Left lung (tissue), 14 donors: ENCODE measurements at regions of chr15 and their contacts with region 1.

Region 1: DNA sequence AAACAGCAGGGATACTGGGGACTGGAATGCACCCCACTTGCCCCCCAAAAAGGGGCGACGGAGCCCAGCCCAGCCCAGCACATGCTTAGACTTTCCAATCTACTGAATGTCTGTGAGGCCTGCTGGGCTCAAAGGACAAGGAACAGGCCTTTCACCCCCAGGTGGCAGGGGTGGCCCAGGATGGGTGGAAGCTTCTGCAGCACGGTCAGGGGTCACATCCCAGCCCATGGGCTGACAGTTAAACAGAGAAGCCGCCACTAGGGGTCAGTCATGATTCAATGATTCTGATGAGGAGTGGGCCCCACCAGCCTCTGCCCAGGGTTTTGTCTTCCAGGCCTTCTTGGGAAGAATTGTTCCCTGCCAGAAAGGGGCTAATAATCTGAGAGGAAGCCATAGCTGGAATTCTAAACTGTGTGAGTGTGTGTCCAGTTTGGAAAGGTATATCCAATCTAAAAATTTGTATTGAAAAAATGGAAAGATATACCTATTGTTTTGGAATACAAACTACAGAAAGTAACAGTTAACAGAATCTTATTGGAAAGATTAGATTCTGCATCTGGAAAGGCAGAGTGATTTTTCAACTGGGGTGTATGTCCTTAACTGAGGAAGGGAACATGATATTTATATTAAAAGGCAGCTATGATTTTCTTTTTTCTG is 2.2 kb downstream of the CHRNB4 start:
- DNase-seq: peak in 1 of 4 donors; percentile 72
- ATAC-seq: peak; percentile 61
- H3K4me3 ChIP-seq: no peak overlapping the region
- H3K27ac ChIP-seq: no peak overlapping the region
- H3K4me1 ChIP-seq: peaks cover 5 to 8% of the 10 kb centered on the region in 2 donors
- H3K27me3 ChIP-seq: peaks cover 0 to 22% of the 10 kb centered on the region in 2 donors
- CTCF ChIP-seq: peak; percentile 53 to 54

Region 2: DNA sequence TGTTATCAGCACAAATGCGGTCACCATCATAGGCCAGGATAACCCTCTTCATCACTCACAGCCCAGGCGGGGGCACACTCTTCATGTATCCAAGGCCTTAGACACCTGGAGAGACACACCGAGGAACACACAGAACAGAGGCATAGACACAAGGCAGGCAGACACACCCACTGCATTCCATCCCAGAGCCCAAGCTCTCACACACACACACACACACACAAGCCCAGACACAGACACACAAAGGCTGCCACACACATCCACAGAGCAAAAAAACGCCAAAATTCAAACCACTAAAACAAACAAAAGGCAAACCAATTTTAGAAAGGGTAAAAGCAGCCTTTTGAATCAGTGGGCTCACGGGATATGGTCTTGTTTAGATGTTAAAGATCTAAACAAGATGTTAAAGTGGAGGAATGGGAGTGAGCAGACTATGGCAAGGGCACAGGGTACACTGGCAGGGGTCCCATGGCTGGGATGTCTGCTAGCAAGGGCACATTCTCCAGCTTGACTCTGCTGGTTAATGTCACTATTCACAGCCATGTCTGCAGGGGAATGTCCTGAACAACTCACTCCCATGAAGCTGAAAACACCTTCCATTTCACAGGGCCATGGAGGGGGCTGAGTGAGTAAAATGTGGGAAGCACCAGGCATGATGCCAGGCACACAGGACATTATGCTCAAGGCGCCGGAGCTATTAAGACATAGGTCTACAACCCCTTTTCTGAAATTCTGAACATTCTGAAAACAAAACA is 313.5 kb before region 1 on chr15:
- intact Hi-C with region 1: no loop called
- DNase-seq: no peak
- ATAC-seq: peak; percentile 33
- H3K4me3 ChIP-seq: no peak overlapping the region
- H3K27ac ChIP-seq: no peak overlapping the region
- H3K4me1 ChIP-seq: no peaks in the 10 kb centered on the region
- H3K27me3 ChIP-seq: no peaks in the 10 kb centered on the region
- CTCF ChIP-seq: no peak

Region 3: GRCh38 chr15:78527325-78527724 is 111.5 kb before region 1 on chr15:
- intact Hi-C with region 1: no loop called
- DNase-seq: no peak
- ATAC-seq: no peak
- H3K4me3 ChIP-seq: no peak overlapping the region
- H3K27ac ChIP-seq: no peak overlapping the region
- H3K4me1 ChIP-seq: no peaks in the 10 kb centered on the region
- H3K27me3 ChIP-seq: no peaks in the 10 kb centered on the region
- CTCF ChIP-seq: no peak

Region 4: GRCh38 chr15:78709263-78709882 is 70.6 kb after region 1 on chr15:
- intact Hi-C with region 1: loop called in 1 of 2 experiments (anchors 5 kb)
- DNase-seq: peak; percentile 51 to 93 (median 64)
- ATAC-seq: peak; percentile 100
- H3K4me3 ChIP-seq: no peak overlapping the region
- H3K27ac ChIP-seq: no peak overlapping the region
- H3K4me1 ChIP-seq: no peaks in the 10 kb centered on the region
- H3K27me3 ChIP-seq: peaks cover 9 to 30% of the 10 kb centered on the region in 2 donors
- CTCF ChIP-seq: peak; percentile 78 to 83